Activated naive CD4-positive, alpha-beta T cell treated with anti-CD3 and anti-CD28 coated beads for 36 hours (primary cell): ENCODE measurements at regions of chr18 and their contacts with region 1.

Region 1: GRCh38 chr18:63518178-63519012 is 23.8 kb upstream of the SERPINB12 start:
- DNase-seq: peak; percentile 79
- H3K4me3 Mint-ChIP-seq: no peak overlapping the region
- H3K27ac Mint-ChIP-seq: no peak overlapping the region
- H3K4me1 Mint-ChIP-seq: no peaks in the 10 kb centered on the region
- H3K27me3 Mint-ChIP-seq: peaks cover 8% of the 10 kb centered on the region

Region 2: GRCh38 chr18:63528863-63529492 is 10.6 kb after region 1 on chr18:
- CTCF ChIA-PET with region 1: interaction called, 18 read pairs
- intact Hi-C with region 1: no loop called
- DNase-seq: no peak
- H3K4me3 Mint-ChIP-seq: no peak overlapping the region
- H3K27ac Mint-ChIP-seq: no peak overlapping the region
- H3K4me1 Mint-ChIP-seq: no peaks in the 10 kb centered on the region
- H3K27me3 Mint-ChIP-seq: peaks cover 6% of the 10 kb centered on the region

Region 3: GRCh38 chr18:63676526-63676925 is 158.1 kb after region 1 on chr18:
- CTCF ChIA-PET with region 1: no interaction called
- intact Hi-C with region 1: loop called (anchors 5 kb)
- DNase-seq: peak; percentile 4
- H3K4me3 Mint-ChIP-seq: no peak overlapping the region
- H3K27ac Mint-ChIP-seq: no peak overlapping the region
- H3K4me1 Mint-ChIP-seq: no peaks in the 10 kb centered on the region
- H3K27me3 Mint-ChIP-seq: peaks cover 2% of the 10 kb centered on the region

Region 4: GRCh38 chr18:63936156-63936931 is 417.9 kb after region 1 on chr18:
- CTCF ChIA-PET with region 1: interaction called, 19 read pairs
- intact Hi-C with region 1: loop called (anchors 1 kb)
- DNase-seq: peak; percentile 77
- H3K4me3 Mint-ChIP-seq: no peak overlapping the region
- H3K27ac Mint-ChIP-seq: no peak overlapping the region
- H3K4me1 Mint-ChIP-seq: peaks cover 2% of the 10 kb centered on the region
- H3K27me3 Mint-ChIP-seq: peaks cover 13% of the 10 kb centered on the region

Region 5: DNA sequence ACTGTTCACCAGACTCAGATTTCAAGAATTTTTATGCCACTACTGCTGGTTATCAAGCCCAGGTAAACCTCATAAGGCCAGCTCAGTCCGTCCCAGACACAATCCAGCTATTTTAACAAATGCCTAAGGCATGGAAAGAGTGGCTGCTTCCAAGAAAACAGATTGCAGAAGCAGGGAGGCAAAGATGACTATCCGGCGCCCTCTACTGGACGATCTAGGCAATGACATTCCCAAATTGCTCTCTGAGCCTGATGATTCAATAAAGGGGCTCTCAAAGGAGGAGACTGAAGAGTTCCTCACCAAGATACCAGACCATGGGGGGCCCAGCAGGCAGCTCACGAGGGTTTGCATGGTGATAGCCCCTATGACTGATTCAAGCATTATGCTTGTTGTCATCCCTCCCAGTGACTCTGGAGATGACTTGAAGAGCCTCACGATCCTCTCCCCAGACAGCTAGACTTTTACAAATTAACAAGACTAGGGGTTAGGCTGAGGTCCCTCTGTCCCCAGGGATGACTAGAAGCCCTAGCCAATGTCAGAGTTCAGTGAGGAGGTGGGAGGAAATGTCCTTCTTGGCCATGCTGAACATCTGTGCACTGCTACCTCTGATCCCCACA is 476.5 kb after region 1 on chr18:
- CTCF ChIA-PET with region 1: interaction called, 8 read pairs
- intact Hi-C with region 1: loop called (anchors 1 kb)
- DNase-seq: peak; percentile 61
- H3K4me3 Mint-ChIP-seq: no peak overlapping the region
- H3K27ac Mint-ChIP-seq: no peak overlapping the region
- H3K4me1 Mint-ChIP-seq: peaks cover 5% of the 10 kb centered on the region
- H3K27me3 Mint-ChIP-seq: no peaks in the 10 kb centered on the region